ENCODE measurements at regions of chr2 and their contacts with region 1.

Region 1: DNA sequence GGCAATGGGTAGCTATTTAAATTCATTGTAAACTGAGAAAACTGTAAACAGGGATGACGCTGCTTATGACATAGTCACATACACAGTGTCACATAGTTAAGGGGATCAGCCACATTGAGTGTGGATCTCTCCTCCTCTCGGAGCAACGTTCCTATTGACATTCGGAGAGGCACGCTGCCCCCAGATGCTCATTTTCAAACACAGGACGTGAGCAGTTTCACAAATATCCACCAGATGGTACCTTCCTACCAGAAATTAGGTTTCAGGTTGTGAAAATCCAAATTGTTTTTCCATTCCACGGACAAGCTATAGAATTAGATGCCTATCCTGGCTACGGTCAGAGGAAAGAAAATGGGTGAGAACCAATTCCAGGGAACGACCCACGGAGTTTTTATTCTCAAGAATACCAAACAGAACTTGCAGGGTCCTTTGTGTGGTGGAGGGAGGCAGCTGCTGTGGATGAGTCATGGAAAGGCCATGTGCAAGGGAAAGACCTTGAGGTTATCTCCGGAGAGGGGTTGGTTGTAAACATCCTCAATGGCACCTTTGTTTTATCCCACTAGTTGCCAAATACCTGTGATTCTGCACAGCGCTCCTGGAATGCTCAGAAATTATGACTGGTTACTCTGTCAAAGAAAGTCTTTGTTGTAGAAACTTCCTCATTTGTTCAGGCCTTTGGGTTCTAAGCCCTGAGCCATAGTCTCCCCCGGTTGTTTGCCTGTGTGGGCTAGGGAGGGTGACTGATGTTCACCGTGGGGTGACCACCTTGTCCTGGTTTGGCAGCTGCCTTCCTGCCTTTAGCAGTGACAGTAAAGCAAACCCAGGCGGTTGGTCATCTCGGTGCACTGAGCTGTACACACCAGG is 88.0 kb downstream of the ACTR3 start:
- DNase-seq: peak in 2 of 3 donors; percentile 43
- ATAC-seq: peak; percentile 84
- H3K4me3 ChIP-seq: no peak overlapping the region
- H3K4me1 ChIP-seq: no peaks in the 10 kb centered on the region
- CTCF ChIP-seq: no peak

Region 2: GRCh38 chr2:114294741-114295140 is 316.8 kb after region 1 on chr2:
- intact Hi-C with region 1: no loop called
- DNase-seq: no peak
- ATAC-seq: no peak
- H3K4me3 ChIP-seq: no peak overlapping the region
- H3K4me1 ChIP-seq: no peaks in the 10 kb centered on the region
- CTCF ChIP-seq: no peak

Region 3: DNA sequence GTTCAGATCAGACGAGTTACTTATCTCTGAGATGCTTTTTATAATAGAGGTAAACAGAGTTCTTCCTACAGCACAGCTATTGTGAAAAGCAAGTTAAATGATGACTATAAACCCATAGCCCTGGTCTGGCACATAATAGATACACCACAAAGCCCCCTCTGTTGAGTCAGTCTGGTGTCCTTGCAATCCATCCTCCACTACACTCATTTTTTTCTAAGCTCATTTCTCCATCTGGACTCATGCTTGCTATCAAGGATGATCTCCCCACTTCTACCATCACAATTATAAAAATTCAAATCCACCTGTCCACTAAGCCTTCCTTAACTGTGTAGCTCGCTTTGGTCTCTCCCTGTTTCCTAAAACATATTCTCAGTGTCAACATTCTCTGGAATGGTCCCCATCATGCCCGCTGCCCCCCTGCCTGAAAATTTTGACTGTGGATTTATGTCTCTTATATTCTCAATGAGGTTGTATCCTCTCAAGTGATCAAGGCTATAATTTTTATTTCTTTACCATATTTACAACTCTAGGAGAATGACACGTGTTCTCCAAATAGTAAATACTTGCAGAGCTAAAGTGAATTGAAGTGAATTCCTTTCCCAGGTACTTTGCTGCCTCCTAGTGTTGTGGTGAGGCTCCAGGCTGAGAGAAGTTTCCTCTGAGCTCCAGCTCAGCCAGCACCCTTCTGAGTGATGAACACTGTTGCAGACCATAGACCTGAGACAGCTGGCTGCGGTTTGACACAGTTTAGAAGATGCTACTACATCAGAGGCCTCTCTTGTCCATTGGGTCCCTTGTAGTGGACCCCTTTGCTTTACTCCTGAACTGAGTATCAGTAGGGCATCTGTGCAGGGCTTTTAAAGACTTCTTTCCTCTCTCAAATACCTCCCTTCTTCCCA is 573.3 kb after region 1 on chr2:
- intact Hi-C with region 1: loop called in 1 of 2 experiments (anchors 2 kb)
- DNase-seq: peak in 2 of 3 donors; percentile 58 to 86
- ATAC-seq: peak; percentile 81
- H3K4me3 ChIP-seq: no peak overlapping the region
- H3K4me1 ChIP-seq: peaks cover 14% of the 10 kb centered on the region
- CTCF ChIP-seq: peak; percentile 45

Measured in mucosa of descending colon (tissue), 3 donors.